Heart right ventricle (tissue), 16 donors: ENCODE measurements at regions of chr19 and their contacts with region 1.

Region 1: DNA sequence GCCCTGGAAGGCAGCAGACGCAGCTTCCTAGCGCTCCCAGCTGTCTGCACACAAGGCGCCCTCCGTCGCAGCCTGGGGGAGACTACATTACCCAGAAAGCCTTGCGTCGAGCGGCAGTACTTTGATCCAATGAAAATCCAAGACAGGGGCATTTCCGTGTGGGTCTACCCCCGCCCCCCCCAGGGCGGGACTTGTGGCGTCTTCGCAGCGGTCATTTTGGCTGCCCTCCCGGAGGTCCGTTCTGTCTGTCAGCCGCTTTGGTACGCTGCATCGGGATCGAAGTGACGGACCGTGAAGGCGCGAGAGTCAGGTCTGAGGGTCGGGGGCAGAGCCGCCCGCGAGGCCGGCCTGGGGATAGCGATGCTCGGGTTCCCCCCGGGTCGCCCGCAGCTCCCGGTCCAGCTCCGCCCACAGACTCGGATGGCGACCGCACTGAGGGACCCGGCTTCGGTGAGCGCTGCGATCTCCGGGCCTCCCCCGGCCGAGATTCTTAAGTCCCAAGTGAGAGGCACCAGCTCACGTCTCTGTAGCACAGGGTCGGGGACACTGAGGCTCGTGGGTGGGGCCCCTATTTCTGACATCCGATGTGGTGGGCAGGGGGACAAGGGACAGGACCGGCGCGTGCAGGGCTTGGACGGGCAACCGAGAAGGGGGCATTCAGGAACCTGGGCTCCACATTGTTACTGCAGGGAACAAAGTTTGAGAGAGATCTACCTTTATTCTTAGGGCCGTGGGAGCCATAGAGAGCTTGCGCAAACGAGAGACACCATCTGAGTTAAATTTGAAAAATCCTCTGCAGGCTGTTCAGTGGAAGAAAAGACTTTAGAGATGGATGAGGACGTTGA is at the start of gene ZNF211:
- DNase-seq: peak; percentile 92 to 95
- ATAC-seq: peak; percentile 100
- H3K4me3 ChIP-seq: peak within 1 kb of the TSS; percentile 65 to 98 (median 92)
- H3K27ac ChIP-seq: peak within 1 kb of the TSS; percentile 38 to 91 (median 86)
- H3K4me1 ChIP-seq: peaks cover 5 to 18% (median 12%) of the 10 kb centered on the region in 9 donors
- H3K27me3 ChIP-seq: no peaks in the 10 kb centered on the region
- CTCF ChIP-seq: peak in 3 of 9 donors; percentile 20 to 25 (median 25)
- total RNA-seq, gene ZNF211: 9.2 to 14.1 (median 10.4) TPM

Region 2: GRCh38 chr19:57578487-57579205 is 54.6 kb before region 1 on chr19 and contains the start of gene ZNF416:
- intact Hi-C with region 1: loop called in 1 of 10 experiments (anchors 2 kb)
- DNase-seq: peak; percentile 95 to 99
- ATAC-seq: peak; percentile 96 to 99 (median 98)
- H3K4me3 ChIP-seq: peak within 1 kb of the TSS; percentile 72 to 98 (median 88)
- H3K27ac ChIP-seq: peak within 1 kb of the TSS in 9 of 10 donors; percentile 61 to 83 (median 75)
- H3K4me1 ChIP-seq: peaks cover 12 to 38% (median 21%) of the 10 kb centered on the region in 9 donors
- H3K27me3 ChIP-seq: no peaks in the 10 kb centered on the region
- CTCF ChIP-seq: peak in 5 of 9 donors; percentile 17 to 56 (median 49)
- total RNA-seq, gene ZNF416: 2.9 to 6.5 (median 4.6) TPM

Region 3: DNA sequence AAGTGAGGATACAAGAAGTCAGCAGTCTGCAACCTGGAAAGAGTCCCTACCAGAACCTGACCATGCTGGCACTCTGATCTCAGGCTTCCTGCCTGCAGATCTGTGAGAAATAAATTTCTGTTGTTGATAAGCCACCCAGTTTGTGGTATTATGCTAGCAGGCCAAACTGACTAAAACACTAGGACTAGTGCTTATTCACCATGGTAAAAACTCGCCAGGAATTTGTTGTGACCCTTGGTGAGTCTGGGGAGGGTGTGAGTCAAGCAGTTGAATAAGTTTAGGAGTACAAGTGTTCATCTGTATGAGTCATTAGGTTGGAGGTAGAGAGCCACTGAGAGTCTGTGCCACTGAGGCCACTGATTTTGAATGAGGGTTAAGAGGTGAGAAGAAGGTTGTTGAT is 45.7 kb before region 1 on chr19:
- intact Hi-C with region 1: loop called in 1 of 10 experiments (anchors 5 kb)
- DNase-seq: no peak
- ATAC-seq: no peak
- H3K4me3 ChIP-seq: no peak overlapping the region
- H3K27ac ChIP-seq: no peak overlapping the region
- H3K4me1 ChIP-seq: peaks cover 5 to 22% (median 16%) of the 10 kb centered on the region in 9 donors
- H3K27me3 ChIP-seq: no peaks in the 10 kb centered on the region
- CTCF ChIP-seq: no peak

Region 4: DNA sequence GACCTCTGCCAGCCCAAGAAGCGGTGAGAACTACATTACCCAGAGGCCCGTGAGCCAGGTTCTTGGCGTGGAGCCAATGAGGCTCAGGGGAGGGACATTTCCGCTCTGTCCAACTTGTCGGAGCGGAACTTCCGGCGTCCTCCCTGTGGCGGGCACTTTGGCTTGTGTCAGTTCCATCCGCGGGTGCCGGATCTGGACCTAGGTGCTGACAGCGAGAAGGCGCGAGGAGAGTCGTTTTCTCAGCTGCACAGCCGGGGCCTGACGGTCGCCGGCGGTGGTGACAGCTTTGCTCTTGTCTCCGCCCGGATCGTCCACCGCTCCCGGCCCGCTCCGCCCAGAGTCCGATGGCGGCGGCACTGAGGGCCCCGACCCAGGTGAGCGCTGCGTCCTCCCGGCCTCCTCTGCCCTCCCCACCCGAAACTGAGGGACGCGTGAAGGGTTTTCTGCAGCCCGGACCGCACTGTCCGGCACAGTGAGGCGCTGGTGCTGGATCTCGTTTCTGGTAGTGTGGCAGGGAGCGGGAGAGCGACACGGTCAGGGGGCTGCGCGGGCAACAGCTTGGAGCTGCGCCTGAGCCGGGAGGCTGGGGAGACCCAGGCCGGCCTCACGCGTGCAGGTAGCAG is 33.3 kb before region 1 on chr19 and contains the start of gene ZNF530:
- intact Hi-C with region 1: loop called in 1 of 10 experiments (anchors 1 kb)
- DNase-seq: peak; percentile 96
- ATAC-seq: peak; percentile 98 to 100 (median 100)
- H3K4me3 ChIP-seq: peak within 1 kb of the TSS; percentile 60 to 97 (median 83)
- H3K27ac ChIP-seq: peak within 1 kb of the TSS in 9 of 10 donors; percentile 41 to 84 (median 67)
- H3K4me1 ChIP-seq: peaks cover 2 to 21% (median 10%) of the 10 kb centered on the region in 9 donors
- H3K27me3 ChIP-seq: no peaks in the 10 kb centered on the region
- CTCF ChIP-seq: peak in 2 of 9 donors; percentile 8 to 22
- total RNA-seq, gene ZNF530: 3.2 to 5.6 (median 4.4) TPM

Region 5: DNA sequence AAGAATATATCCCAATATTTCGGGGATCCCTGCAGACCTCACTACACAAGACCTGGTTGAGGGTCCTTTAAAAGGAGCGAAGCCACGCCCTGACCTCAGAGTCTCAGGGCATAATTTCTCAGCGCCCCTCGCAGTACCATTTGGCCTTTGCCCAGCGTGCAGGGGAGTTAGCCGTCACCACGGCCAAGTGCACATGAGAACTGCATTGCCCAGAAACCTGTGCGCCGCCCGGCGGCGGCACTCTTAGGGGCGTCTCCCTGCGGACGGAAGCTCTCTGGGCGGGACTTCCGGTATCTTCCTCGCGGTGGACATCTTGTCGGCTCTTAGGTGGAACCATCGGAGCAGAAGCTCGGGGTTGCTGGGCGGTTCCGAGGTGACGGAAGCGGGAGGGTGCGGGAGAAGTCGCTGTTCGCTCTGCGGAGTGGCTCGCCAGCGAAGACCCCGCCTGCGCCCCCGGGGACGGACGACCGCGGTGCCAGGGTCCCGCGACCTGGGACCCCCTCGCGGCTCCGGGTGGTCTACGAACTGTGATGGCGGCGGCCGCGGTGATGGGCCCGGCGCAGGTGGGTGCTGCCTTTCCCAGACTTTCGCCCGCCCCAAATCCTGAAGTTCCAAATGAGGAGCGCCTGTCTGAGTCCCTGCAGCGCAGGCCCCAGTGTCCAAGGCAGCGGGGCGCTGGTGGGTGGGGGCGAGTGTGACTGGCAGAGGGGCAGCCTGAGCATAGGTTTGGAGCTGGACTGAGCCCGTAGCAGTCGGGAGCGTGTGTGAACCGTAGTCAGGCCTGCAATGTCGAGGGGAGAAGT is 19.1 kb before region 1 on chr19 and contains the start of gene ZNF134:
- intact Hi-C with region 1: loop called in 2 of 10 experiments (anchors 2 kb)
- DNase-seq: peak; percentile 93 to 94
- ATAC-seq: peak; percentile 96 to 100 (median 99)
- H3K4me3 ChIP-seq: peak within 1 kb of the TSS; percentile 66 to 100 (median 94)
- H3K27ac ChIP-seq: peak within 1 kb of the TSS in 9 of 10 donors; percentile 54 to 89 (median 85)
- H3K4me1 ChIP-seq: peaks cover 0 to 33% (median 14%) of the 10 kb centered on the region in 9 donors
- H3K27me3 ChIP-seq: no peaks in the 10 kb centered on the region
- CTCF ChIP-seq: peak in 7 of 9 donors; percentile 27 to 64 (median 53)
- total RNA-seq, gene ZNF134: 9.5 to 18.0 (median 12.7) TPM

Region 6: DNA sequence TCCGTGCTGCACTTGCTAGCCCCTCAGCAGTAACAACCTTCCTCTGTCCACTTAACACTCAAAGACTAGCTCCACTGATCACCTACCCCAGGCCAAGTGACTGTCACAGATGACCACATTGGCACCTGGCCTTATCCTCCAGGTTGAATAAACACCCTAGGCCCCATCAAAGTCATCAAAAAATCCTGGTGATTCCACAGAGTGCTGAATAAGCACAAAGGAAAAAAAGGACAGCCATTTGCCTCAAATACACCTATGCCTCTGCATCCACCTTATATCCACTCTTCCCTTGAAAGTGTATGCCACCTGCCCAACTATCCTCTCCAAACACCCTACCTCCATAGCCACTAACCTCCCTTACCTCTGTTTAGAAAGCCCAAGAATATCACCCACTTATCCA is 73.1 kb after region 1 on chr19:
- intact Hi-C with region 1: no loop called
- DNase-seq: no peak
- ATAC-seq: no peak
- H3K4me3 ChIP-seq: no peak overlapping the region
- H3K27ac ChIP-seq: no peak overlapping the region
- H3K4me1 ChIP-seq: peaks cover 6 to 42% (median 15%) of the 10 kb centered on the region in 9 donors
- H3K27me3 ChIP-seq: no peaks in the 10 kb centered on the region
- CTCF ChIP-seq: no peak

Region 7: DNA sequence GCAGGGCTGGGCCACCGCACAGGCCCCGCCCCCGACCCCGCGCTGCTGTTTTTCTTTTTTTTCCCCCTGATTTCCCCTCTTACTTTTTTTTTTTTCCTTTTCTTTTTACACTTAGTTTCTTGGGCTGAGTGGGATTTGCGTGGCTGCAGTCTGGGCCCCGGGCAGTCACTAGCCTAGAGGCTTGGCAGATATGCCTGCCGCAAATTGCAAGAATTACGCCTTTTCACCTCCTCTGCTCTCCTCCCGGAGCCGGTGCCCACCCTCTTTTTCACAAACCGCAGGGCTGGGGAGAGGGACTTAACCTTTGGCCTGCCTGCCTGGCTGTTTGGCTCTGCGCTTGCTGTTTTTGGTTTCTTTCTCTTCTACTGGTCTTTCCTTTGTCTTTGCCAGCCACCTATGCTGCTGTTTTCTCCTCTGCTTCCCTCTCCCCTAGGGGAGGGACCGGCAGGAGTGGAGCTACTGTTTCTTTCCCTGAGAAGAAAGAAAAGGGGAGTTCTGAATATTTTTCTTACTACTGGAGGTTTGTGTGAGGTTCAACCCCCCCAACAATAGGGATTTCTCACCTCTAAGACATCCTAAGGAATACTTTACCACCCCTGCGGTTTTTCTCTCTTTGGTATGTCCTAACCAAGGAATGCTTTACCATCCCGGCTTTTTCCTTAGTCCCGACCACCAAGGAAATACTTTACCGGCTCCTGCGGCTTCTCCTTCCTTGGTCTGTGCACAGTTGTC is 170.6 kb after region 1 on chr19:
- intact Hi-C with region 1: no loop called
- DNase-seq: no peak
- ATAC-seq: peak in 7 of 8 donors; percentile 26 to 66 (median 54)
- H3K4me3 ChIP-seq: peak overlapping the region; percentile 4 to 63 (median 56)
- H3K27ac ChIP-seq: peak overlapping the region in 9 of 10 donors; percentile 51 to 88 (median 65)
- H3K4me1 ChIP-seq: peaks cover 4 to 50% (median 26%) of the 10 kb centered on the region in 9 donors
- H3K27me3 ChIP-seq: no peaks in the 10 kb centered on the region
- CTCF ChIP-seq: no peak